Sciatic nerve (tissue), 2 donors: ENCODE measurements at regions of chr5 and their contacts with region 1.

Region 1: GRCh38 chr5:125034331-125034730 is 287.9 kb upstream of the ZNF608 start:
- DNase-seq: no peak
- ATAC-seq: no peak

Region 2: GRCh38 chr5:125092077-125092476 is 57.7 kb after region 1 on chr5:
- intact Hi-C with region 1: no loop called
- DNase-seq: no peak
- ATAC-seq: no peak

Region 3: DNA sequence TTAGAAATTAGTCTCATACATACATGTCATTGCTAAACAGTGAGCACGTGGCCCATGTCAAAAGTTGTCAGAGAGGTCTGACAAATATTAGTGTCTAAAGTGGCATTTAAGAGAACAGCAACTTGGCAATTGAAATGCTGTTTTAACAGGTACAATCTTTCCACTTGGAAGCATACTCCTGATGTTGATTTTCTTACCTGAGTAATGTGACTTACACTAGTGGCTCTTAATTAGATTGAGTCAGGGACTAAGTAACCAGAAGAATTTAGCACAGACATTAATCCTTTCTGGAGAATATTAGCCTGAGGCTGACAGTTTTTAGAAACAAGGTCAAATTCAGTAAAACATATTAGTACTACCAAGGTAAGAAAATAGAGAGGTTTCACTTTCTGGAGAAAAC is 69.1 kb after region 1 on chr5:
- intact Hi-C with region 1: loop called (anchors 2 kb)
- DNase-seq: no peak
- ATAC-seq: no peak